HepG2 (cell line): ENCODE measurements at regions of chr10 and their contacts with region 1.

Region 1: GRCh38 chr10:119120413-119120867 is 16.5 kb downstream of the DENND10 start:
- DNase-seq: peak; percentile 96
- ATAC-seq: peak; percentile 93
- H3K4me3 ChIP-seq: no peak overlapping the region; a peak in 1 of 6 replicates
- H3K27ac ChIP-seq: peak overlapping the region; percentile 95
- H3K4me1 ChIP-seq: peaks cover 58% of the 10 kb centered on the region
- H3K27me3 ChIP-seq: no peaks in the 10 kb centered on the region
- CTCF ChIP-seq: no peak
- EP300 ChIP-seq: peak; percentile 20 to 93; a peak in 3 of 4 replicates
- POLR2A ChIP-seq: no peak
- RAD21 ChIP-seq: no peak

Region 2: DNA sequence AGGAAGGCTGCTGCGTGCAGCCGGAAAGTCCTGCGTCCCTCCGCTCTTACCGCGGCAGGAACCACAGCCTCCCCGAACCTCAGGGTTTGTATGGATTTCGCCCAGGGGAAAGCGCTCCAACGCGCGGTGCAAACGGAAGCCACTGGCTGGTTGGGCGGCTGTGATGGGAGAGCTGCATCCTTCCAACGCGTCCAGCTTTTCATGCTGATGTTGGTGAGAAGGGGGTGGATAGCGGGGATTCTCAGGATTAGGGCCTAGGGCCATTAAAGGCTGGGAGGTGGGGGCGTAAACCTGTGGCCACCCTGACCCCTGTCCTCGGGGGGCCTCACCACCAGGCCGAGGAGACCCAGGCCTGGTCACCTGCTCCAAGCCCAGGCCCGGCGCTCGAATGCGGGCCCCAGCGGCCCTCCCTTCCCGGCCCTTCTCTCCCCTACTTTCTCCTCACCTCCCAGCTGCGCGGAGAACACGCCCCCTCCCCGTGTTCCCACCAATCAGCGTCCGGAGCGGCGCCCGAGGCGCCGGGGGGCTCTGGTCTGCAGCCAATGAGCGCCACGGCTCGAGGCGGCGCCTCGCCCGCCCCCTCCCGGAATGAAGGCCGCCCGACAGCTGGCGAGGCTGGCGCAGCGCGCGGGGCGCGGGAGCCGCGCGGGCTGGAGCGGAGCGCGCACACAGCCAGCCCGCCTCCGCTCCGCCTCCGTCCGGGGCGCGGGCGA is 91.4 kb before region 1 on chr10:
- CTCF ChIA-PET with region 1: no interaction called
- POLR2A ChIA-PET with region 1: interaction called, 4 read pairs
- in situ Hi-C with region 1: no loop called
- intact Hi-C with region 1: loop called (anchors 2 kb)
- DNase-seq: peak; percentile 84
- ATAC-seq: peak; percentile 82
- H3K4me3 ChIP-seq: peak overlapping the region; percentile 49 to 77 (median 64)
- H3K27ac ChIP-seq: no peak overlapping the region
- H3K4me1 ChIP-seq: peaks cover 60% of the 10 kb centered on the region
- H3K27me3 ChIP-seq: peaks cover 3 to 27% of the 10 kb centered on the region in 2 experiments; a peak in 2 of 5 replicates
- CTCF ChIP-seq: no peak
- EP300 ChIP-seq: no peak
- POLR2A ChIP-seq: no peak; a peak in 1 of 4 replicates
- RAD21 ChIP-seq: no peak; the same call in 1 of the 2 replicates

Region 3: DNA sequence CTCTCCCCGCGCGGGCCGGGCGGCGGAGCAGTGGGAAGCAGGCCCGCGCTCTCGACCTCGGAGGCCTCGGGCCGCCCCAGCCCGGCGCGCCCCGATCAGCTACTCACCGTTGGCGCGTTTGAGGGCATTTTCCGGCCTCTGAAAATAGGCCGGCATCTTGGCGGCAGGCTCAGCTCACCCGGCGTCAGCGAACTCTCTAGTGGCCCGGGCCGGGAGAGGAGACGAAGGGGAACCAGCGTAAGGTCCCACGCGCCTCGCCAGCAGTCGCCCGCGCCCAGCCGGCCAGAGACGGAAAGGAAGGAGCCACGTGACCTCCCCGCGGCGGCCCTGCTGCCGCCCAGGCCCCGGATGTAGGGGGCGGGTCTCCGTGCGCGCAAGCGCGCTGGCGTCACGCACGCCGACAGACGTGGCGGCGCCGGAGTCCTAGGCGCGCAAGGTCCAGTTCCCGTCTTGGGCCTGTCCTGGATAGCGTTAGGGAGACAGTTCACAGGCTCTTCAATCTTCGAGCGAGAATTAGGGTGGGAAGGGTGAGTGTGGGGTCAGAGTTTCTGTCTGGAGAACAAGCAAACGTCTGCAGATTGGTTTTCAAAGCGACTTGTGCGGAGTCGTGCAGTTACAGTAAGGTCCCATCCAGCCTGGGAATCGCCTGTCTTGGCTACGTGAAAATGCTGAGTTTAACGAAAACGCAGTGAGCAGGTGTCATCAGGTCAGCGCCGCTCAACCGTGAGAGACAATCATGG is 39.7 kb before region 1 on chr10 and contains the start of gene EIF3A:
- CTCF ChIA-PET with region 1: no interaction called
- POLR2A ChIA-PET with region 1: interaction called, 5 read pairs
- in situ Hi-C with region 1: no loop called
- intact Hi-C with region 1: loop called (anchors 2 kb)
- DNase-seq: peak; percentile 82
- ATAC-seq: peak; percentile 91
- H3K4me3 ChIP-seq: peak within 1 kb of the TSS; percentile 79 to 99 (median 90)
- H3K27ac ChIP-seq: peak within 1 kb of the TSS; percentile 94
- H3K4me1 ChIP-seq: peaks cover 53% of the 10 kb centered on the region
- H3K27me3 ChIP-seq: no peaks in the 10 kb centered on the region; a peak in 1 of 5 replicates
- CTCF ChIP-seq: peak; percentile 5; the same call in 1 of the 2 replicates
- EP300 ChIP-seq: no peak
- POLR2A ChIP-seq: peak; percentile 93 to 99
- RAD21 ChIP-seq: no peak
- total RNA-seq, gene EIF3A: 117 and 168 TPM in 2 replicates

Region 4: GRCh38 chr10:119103903-119104652 is 16.4 kb before region 1 on chr10 and contains the start of gene DENND10:
- CTCF ChIA-PET with region 1: no interaction called
- POLR2A ChIA-PET with region 1: interaction called, 106 read pairs
- in situ Hi-C with region 1: no loop called
- intact Hi-C with region 1: no loop called
- DNase-seq: no peak
- ATAC-seq: peak; percentile 86
- H3K4me3 ChIP-seq: peak within 1 kb of the TSS; percentile 70 to 92 (median 83)
- H3K27ac ChIP-seq: peak within 1 kb of the TSS; percentile 63
- H3K4me1 ChIP-seq: peaks cover 56% of the 10 kb centered on the region
- H3K27me3 ChIP-seq: no peaks in the 10 kb centered on the region
- CTCF ChIP-seq: no peak
- EP300 ChIP-seq: no peak
- POLR2A ChIP-seq: peak; percentile 87 to 98
- RAD21 ChIP-seq: peak; percentile 50; the same call in 1 of the 2 replicates
- total RNA-seq, gene DENND10: 43.7 and 55.1 TPM in 2 replicates

Region 5: DNA sequence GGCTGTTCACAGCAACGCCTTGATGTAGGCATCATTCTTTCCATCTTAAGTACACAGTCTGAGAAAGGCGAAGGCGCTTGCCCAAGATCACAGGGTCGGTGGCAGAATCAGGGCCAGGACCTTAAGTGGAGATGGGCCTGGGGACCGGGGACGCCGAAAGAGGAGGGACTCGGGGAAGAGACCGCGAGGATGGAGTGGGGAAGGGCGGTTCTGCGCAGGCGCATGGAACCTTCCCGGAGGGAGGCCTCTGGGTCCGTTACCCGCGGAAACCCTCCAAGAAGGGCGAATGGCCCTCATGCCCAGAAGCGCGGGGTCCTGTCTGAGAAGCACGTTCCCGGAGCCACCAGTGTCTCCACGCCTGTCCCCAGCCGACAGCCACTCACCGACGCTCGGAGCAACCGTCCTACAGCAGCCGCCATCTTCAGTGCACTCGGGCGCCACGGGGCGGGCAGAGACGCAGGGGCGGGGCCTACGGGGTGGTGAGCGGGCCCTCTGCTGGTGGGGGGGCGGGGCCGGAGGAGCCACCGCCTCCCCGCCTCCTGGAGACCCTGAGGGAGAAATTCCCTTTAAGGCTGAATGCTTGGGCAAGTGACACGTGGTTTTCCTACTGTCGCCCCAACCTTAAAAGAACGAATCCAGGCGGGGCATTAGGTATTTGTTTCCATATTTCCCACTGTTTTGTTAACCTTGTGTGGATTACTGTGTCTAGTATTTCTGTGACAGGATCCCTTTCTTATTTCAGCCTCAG is 58.1 kb after region 1 on chr10 and contains the start of gene PRDX3:
- CTCF ChIA-PET with region 1: no interaction called
- POLR2A ChIA-PET with region 1: no interaction called
- in situ Hi-C with region 1: no loop called
- intact Hi-C with region 1: loop called (anchors 5 kb)
- DNase-seq: peak; percentile 85
- ATAC-seq: peak; percentile 90
- H3K4me3 ChIP-seq: peak within 1 kb of the TSS; percentile 75 to 94 (median 81)
- H3K27ac ChIP-seq: peak within 1 kb of the TSS; percentile 93
- H3K4me1 ChIP-seq: peaks cover 52% of the 10 kb centered on the region
- H3K27me3 ChIP-seq: no peaks in the 10 kb centered on the region; a peak in 1 of 5 replicates
- CTCF ChIP-seq: peak; percentile 44
- EP300 ChIP-seq: no peak
- POLR2A ChIP-seq: peak; percentile 89 to 95
- RAD21 ChIP-seq: no peak
- total RNA-seq, gene PRDX3: 407 and 643 TPM in 2 replicates